ENCODE measurements at regions of chr4 and their contacts with region 1.

Region 1: GRCh38 chr4:87848622-87849351 is 16.0 kb downstream of the MEPE start:
- DNase-seq: peak; percentile 42
- ATAC-seq: peak; percentile 89
- H3K4me3 Mint-ChIP-seq: peak overlapping the region; percentile 59
- H3K27ac Mint-ChIP-seq: no peak overlapping the region
- H3K4me1 Mint-ChIP-seq: peaks cover 31% of the 10 kb centered on the region
- H3K27me3 Mint-ChIP-seq: no peaks in the 10 kb centered on the region; the same call in 1 of the 2 replicates
- CTCF ChIP-seq: peak; percentile 56

Region 2: DNA sequence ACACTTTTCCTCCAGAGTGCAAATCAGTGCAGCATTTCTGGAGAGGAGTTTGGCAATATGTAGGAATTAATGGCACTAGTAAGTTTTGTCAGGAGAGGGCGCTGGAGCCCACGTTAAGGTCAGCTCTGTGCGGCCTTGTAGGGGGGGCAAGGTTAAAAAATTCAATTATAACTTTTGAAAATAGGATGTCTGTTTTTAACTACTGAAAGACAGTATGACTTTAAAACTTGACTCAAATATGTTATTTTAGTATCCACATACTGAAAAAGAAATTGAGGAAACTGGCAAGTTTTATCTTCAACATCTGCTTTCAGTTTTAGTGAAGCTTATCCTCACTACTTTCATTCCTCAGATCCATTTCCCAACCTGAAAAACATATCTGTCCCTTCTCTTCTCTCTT is 495.2 kb before region 1 on chr4:
- CTCF ChIA-PET with region 1: interaction called, 10 read pairs
- POLR2A ChIA-PET with region 1: no interaction called
- DNase-seq: peak; percentile 52
- ATAC-seq: peak; percentile 86
- H3K4me3 Mint-ChIP-seq: no peak overlapping the region
- H3K27ac Mint-ChIP-seq: no peak overlapping the region
- H3K4me1 Mint-ChIP-seq: peaks cover 16% of the 10 kb centered on the region
- H3K27me3 Mint-ChIP-seq: no peaks in the 10 kb centered on the region
- CTCF ChIP-seq: peak; percentile 51

Region 3: GRCh38 chr4:87679449-87680169 is 169.2 kb before region 1 on chr4:
- CTCF ChIA-PET with region 1: interaction called, 16 read pairs
- POLR2A ChIA-PET with region 1: no interaction called
- DNase-seq: peak; percentile 72
- ATAC-seq: peak; percentile 81
- H3K4me3 Mint-ChIP-seq: peak overlapping the region; percentile 45
- H3K27ac Mint-ChIP-seq: peak overlapping the region; percentile 89
- H3K4me1 Mint-ChIP-seq: peaks cover 37% of the 10 kb centered on the region
- H3K27me3 Mint-ChIP-seq: no peaks in the 10 kb centered on the region; the same call in 1 of the 2 replicates
- CTCF ChIP-seq: peak; percentile 85

Region 4: GRCh38 chr4:87882321-87882720 is 33.5 kb after region 1 on chr4:
- CTCF ChIA-PET with region 1: no interaction called
- POLR2A ChIA-PET with region 1: no interaction called
- DNase-seq: no peak
- ATAC-seq: no peak
- H3K4me3 Mint-ChIP-seq: no peak overlapping the region
- H3K27ac Mint-ChIP-seq: no peak overlapping the region
- H3K4me1 Mint-ChIP-seq: no peaks in the 10 kb centered on the region
- H3K27me3 Mint-ChIP-seq: no peaks in the 10 kb centered on the region; the same call in 1 of the 2 replicates
- CTCF ChIP-seq: no peak

Region 5: DNA sequence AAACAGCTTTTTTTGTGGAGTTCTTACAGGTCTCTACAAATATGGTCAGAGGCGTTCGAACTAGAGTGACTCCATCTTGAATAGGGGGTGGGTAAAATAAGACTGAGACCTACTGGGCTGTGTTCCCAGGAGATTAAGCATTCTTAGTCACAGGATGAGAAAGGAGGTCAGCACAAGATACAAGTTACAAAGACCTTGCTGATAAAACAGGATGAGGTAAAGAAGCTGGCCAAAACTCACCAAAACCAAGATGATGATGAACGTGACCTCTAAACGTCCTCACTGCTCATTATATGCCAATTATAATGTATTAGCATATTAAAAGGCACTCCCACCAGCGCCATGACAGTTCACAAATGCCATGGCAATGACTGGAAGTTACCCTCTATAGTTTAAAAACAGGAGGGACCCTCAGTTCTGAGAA is 83.9 kb after region 1 on chr4:
- CTCF ChIA-PET with region 1: interaction called, 13 read pairs
- POLR2A ChIA-PET with region 1: interaction called, 3 read pairs
- DNase-seq: no peak
- ATAC-seq: peak; percentile 57
- H3K4me3 Mint-ChIP-seq: no peak overlapping the region
- H3K27ac Mint-ChIP-seq: peak overlapping the region; percentile 70
- H3K4me1 Mint-ChIP-seq: peaks cover 24% of the 10 kb centered on the region
- H3K27me3 Mint-ChIP-seq: no peaks in the 10 kb centered on the region
- CTCF ChIP-seq: no peak

Region 6: GRCh38 chr4:87985097-87985886 is 136.5 kb after region 1 on chr4:
- CTCF ChIA-PET with region 1: interaction called, 11 read pairs
- POLR2A ChIA-PET with region 1: no interaction called
- DNase-seq: peak; percentile 74
- ATAC-seq: peak; percentile 100
- H3K4me3 Mint-ChIP-seq: no peak overlapping the region
- H3K27ac Mint-ChIP-seq: no peak overlapping the region
- H3K4me1 Mint-ChIP-seq: peaks cover 4% of the 10 kb centered on the region
- H3K27me3 Mint-ChIP-seq: no peaks in the 10 kb centered on the region
- CTCF ChIP-seq: 0 out of 2 replicates have a peak, but pooled peaks have one; percentile 32